Caco-2 (cell line): ENCODE measurements at regions of chr5 and their contacts with region 1.

Region 1: GRCh38 chr5:102718819-102719218 is 36.3 kb upstream of the PAM start:
- DNase-seq: no peak
- H3K4me3 ChIP-seq: no peak overlapping the region
- H3K4me3 Mint-ChIP-seq: no peak overlapping the region
- H3K27ac Mint-ChIP-seq: no peak overlapping the region
- H3K4me1 ChIP-seq: peaks cover 27% of the 10 kb centered on the region
- H3K4me1 Mint-ChIP-seq: peaks cover 26% of the 10 kb centered on the region
- H3K27me3 ChIP-seq: no peaks in the 10 kb centered on the region
- H3K27me3 Mint-ChIP-seq: no peaks in the 10 kb centered on the region
- CTCF ChIP-seq: no peak

Region 2: GRCh38 chr5:102691434-102691833 is 27.4 kb before region 1 on chr5:
- CTCF ChIA-PET with region 1: no interaction called
- POLR2A ChIA-PET with region 1: no interaction called
- intact Hi-C with region 1: loop called (anchors 1 kb)
- DNase-seq: no peak
- H3K4me3 ChIP-seq: no peak overlapping the region
- H3K4me3 Mint-ChIP-seq: no peak overlapping the region
- H3K27ac Mint-ChIP-seq: no peak overlapping the region
- H3K4me1 ChIP-seq: no peaks in the 10 kb centered on the region
- H3K4me1 Mint-ChIP-seq: no peaks in the 10 kb centered on the region
- H3K27me3 ChIP-seq: no peaks in the 10 kb centered on the region
- H3K27me3 Mint-ChIP-seq: no peaks in the 10 kb centered on the region
- CTCF ChIP-seq: no peak